Activated CD8-positive, alpha-beta T cell treated with anti-CD3 and anti-CD28 coated beads, Interleukin-2, amount 10 ng/mL, durations not matched to agents 7 days and 5 days (primary cell): ENCODE measurements at regions of chr15 and their contacts with region 1.

Region 1: DNA sequence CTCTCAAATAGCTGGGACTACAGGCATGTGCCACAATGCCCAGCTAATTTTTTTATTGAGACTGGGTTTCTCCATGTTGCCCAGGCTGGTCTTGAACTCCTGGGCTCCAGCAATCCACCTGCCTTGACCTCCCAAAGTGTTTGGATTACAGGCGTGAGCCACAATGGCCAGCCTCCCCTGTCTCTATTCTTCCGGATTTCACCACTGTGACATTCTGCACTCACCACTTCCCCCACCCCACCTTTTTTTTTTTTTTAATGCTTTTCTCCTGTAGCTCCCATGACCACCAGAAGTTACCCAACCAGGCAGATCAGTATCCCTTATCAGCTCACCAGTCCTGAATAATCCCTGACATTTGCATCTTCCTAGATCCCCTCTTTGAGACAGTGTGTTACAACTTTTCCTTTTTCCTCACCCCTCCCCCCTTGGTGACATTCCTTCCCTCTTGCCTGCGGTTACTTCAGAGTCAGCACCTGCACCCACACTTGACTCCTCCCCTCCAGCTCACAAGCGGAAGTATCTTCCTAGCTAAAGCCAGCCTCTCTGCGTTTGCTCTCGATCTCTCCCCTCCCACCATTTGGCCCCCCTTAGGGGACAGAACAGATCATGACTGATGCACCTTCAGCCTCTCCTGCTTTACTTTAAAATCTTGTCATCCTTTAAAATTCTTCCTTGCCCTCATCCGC is 13.5 kb upstream of the ZNF592 start:
- DNase-seq: peak; percentile 86
- ATAC-seq: peak; percentile 81
- H3K4me3 Mint-ChIP-seq: peak overlapping the region; percentile 64
- H3K27ac Mint-ChIP-seq: peak overlapping the region; percentile 93
- H3K4me1 Mint-ChIP-seq: peaks cover 42% of the 10 kb centered on the region
- H3K27me3 Mint-ChIP-seq: no peaks in the 10 kb centered on the region

Region 2: GRCh38 chr15:84658080-84658787 is 76.7 kb before region 1 on chr15 and contains the start of gene NMB:
- CTCF ChIA-PET with region 1: interaction called, 13 read pairs
- POLR2A ChIA-PET with region 1: interaction called, 10 read pairs
- DNase-seq: peak; percentile 85
- ATAC-seq: peak; percentile 72
- H3K4me3 Mint-ChIP-seq: peak within 1 kb of the TSS; percentile 69
- H3K27ac Mint-ChIP-seq: peak within 1 kb of the TSS; percentile 80
- H3K4me1 Mint-ChIP-seq: peaks cover 40% of the 10 kb centered on the region
- H3K27me3 Mint-ChIP-seq: no peaks in the 10 kb centered on the region
- total RNA-seq, gene NMB: 3.3 to 4.1 TPM

Region 3: DNA sequence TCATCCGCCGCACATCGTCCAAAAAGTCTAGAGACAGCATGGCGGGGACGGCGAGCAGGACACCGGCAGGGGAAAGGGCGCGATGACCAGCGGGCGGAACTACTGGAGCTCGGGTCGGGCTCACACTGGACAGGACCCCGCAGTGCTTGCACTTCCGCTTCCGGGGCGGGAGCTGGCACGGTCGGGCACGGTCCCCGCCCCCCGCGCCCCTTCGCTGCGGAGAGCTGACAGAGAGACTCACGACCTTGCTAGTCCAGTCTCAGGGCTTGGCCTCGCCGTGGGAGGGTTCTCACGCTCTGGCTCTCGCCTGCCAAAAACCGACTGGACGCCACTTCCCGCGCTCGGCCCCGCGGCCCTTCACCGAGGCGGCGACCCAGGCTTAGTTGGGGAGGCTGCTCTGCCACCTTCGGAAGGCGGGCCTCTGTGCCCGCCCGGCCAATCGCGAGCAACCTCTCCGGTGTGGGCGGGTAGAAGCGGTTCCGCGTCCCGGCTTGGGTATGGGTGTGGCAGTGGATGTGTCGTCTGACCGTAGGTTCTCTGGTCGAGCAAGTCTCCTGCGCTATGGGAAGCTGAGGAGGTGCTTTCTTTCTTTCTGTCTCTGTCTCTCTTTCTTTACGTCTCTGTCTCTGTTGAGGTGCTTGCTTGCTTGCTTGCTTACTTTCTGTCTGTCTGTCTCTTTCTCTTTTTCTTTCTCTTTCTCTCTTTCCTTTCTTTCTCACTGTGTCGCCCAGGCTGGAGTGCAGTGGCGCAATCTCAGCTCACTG is 18.7 kb before region 1 on chr15 and contains the start of gene SEC11A:
- CTCF ChIA-PET with region 1: interaction called, 101 read pairs
- POLR2A ChIA-PET with region 1: interaction called, 80 read pairs
- DNase-seq: peak; percentile 93
- ATAC-seq: peak; percentile 98
- H3K4me3 Mint-ChIP-seq: peak within 1 kb of the TSS; percentile 95
- H3K27ac Mint-ChIP-seq: peak within 1 kb of the TSS; percentile 98
- H3K4me1 Mint-ChIP-seq: peaks cover 55% of the 10 kb centered on the region
- H3K27me3 Mint-ChIP-seq: no peaks in the 10 kb centered on the region
- total RNA-seq, gene SEC11A: 117 to 119 TPM

Region 4: GRCh38 chr15:84748274-84749110 is 13.6 kb after region 1 on chr15 and contains the start of gene ZNF592:
- CTCF ChIA-PET with region 1: interaction called, 18 read pairs
- POLR2A ChIA-PET with region 1: interaction called, 17 read pairs
- DNase-seq: peak; percentile 82
- ATAC-seq: peak; percentile 68
- H3K4me3 Mint-ChIP-seq: peak within 1 kb of the TSS; percentile 96
- H3K27ac Mint-ChIP-seq: peak within 1 kb of the TSS; percentile 95
- H3K4me1 Mint-ChIP-seq: peaks cover 51% of the 10 kb centered on the region
- H3K27me3 Mint-ChIP-seq: no peaks in the 10 kb centered on the region
- total RNA-seq, gene ZNF592: 36.5 to 36.6 TPM